HepG2 (cell line): ENCODE measurements at regions of chr2 and their contacts with region 1.

Region 1: GRCh38 chr2:102141970-102142828 is at the start of gene IL1R1:
- DNase-seq: peak; percentile 60
- ATAC-seq: peak; percentile 90
- H3K4me3 ChIP-seq: peak within 1 kb of the TSS; percentile 64 to 99 (median 86)
- H3K27ac ChIP-seq: peak within 1 kb of the TSS; percentile 74
- H3K4me1 ChIP-seq: peaks cover 63% of the 10 kb centered on the region
- H3K27me3 ChIP-seq: no peaks in the 10 kb centered on the region; a peak in 1 of 5 replicates
- CTCF ChIP-seq: peak; percentile 28; the same call in 1 of the 2 replicates
- EP300 ChIP-seq: peak; percentile 4 to 33; a peak in 1 of 4 replicates
- POLR2A ChIP-seq: peak; percentile 70 to 78
- RAD21 ChIP-seq: peak; percentile 67
- total RNA-seq, gene IL1R1: 38.0 and 48.3 TPM in 2 replicates

Region 2: DNA sequence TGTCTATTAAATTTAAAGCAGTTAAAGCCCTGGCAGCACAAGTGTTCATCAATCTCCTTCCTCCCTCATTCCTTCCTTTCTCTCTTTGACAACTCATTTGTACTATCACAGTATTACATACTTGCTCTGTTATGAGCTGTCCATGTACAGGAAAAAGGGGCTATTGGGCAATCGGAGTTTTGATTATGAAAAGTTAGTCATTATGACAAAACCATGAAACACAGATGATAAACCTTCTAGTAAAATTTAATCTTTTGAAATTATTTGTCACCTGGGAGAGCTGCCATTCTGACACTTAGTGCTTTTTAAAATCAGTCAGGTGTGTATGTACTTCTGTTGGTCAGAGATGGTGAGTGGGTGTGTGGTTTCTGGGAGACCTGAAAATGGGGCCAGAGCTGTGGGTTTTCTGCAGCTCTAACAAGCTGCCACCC is 405.3 kb before region 1 on chr2:
- CTCF ChIA-PET with region 1: no interaction called
- POLR2A ChIA-PET with region 1: no interaction called
- in situ Hi-C with region 1: no loop called
- intact Hi-C with region 1: no loop called
- DNase-seq: no peak
- ATAC-seq: no peak
- H3K4me3 ChIP-seq: no peak overlapping the region
- H3K27ac ChIP-seq: no peak overlapping the region
- H3K4me1 ChIP-seq: peaks cover 100% of the 10 kb centered on the region
- H3K27me3 ChIP-seq: no peaks in the 10 kb centered on the region
- CTCF ChIP-seq: no peak
- EP300 ChIP-seq: no peak
- POLR2A ChIP-seq: no peak
- RAD21 ChIP-seq: no peak

Region 3: DNA sequence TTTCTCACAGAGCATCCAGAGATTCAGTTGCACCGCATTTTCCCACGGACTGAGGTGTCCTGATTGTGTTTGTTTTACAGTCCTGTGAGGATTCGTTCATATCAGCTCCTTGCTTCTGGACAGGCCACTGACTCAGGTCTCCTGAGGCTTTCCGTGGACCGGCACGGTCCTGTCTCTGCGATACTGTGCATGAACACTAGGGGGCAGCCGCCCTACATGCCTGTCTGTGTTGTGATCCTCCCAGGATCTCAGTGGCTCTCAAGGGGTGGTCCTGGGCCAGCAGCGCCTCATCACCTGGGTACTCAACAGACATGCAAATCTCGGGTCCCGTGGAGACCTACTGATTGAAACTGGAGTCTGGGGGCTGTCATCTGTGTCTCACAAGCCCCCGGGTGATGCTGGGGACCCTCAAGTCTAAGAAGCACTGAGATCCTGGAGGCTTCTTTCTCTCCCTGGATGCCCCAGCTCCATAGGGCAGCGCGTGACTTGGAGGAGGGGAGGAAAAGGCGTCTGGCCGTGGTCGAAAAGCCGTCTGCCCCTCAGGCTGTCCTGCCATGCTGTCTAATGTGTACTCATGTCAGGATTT is 121.5 kb before region 1 on chr2:
- CTCF ChIA-PET with region 1: interaction called, 3 read pairs
- POLR2A ChIA-PET with region 1: interaction called, 17 read pairs
- in situ Hi-C with region 1: no loop called
- intact Hi-C with region 1: loop called (anchors 1 kb)
- DNase-seq: peak; percentile 80
- ATAC-seq: peak; percentile 95
- H3K4me3 ChIP-seq: no peak overlapping the region
- H3K27ac ChIP-seq: no peak overlapping the region
- H3K4me1 ChIP-seq: peaks cover 57% of the 10 kb centered on the region
- H3K27me3 ChIP-seq: no peaks in the 10 kb centered on the region
- CTCF ChIP-seq: peak; percentile 100
- EP300 ChIP-seq: no peak; a peak in 1 of 4 replicates
- POLR2A ChIP-seq: no peak
- RAD21 ChIP-seq: peak; percentile 99

Region 4: DNA sequence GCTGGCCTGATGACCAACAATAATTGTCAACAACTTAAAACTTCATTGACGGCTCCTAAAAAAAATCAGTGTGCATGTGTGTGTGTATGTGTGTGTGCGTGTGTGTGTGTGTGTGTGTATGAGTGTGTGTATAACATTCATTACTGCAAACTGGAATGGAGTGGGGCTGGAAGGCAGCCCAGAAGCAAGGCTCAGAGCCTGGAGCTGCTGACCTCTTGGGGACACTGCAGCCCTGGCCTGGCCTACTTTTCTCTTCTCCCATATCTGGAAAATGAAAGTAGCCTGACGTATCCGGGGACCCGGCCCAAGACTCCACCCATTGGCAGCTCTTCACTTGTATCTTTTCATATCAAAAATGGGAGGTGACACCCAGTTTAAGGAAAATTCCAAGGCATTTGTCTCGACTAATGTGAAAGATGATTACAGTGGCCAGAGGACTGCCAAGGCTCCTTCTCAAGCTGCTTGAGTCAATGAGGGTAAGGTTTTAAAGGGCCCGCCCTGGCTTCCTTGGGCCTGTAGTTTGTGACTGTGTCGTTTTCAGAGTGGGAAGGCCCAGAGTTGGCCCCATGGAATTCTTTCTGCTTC is 72.0 kb before region 1 on chr2:
- CTCF ChIA-PET with region 1: no interaction called
- POLR2A ChIA-PET with region 1: interaction called, 11 read pairs
- in situ Hi-C with region 1: no loop called
- intact Hi-C with region 1: no loop called
- DNase-seq: peak; percentile 79
- ATAC-seq: peak; percentile 96
- H3K4me3 ChIP-seq: peak overlapping the region; percentile 2 to 51 (median 39); a peak in 5 of 6 replicates
- H3K27ac ChIP-seq: peak overlapping the region; percentile 83
- H3K4me1 ChIP-seq: peaks cover 77% of the 10 kb centered on the region
- H3K27me3 ChIP-seq: no peaks in the 10 kb centered on the region
- CTCF ChIP-seq: peak; percentile 80
- EP300 ChIP-seq: 0 out of 4 replicates have a peak, but pooled peaks of 1 of the 2 experiments have one; percentile 4
- POLR2A ChIP-seq: no peak
- RAD21 ChIP-seq: peak; percentile 73

Region 5: GRCh38 chr2:102119255-102119654 is 22.9 kb before region 1 on chr2:
- CTCF ChIA-PET with region 1: no interaction called
- POLR2A ChIA-PET with region 1: interaction called, 12 read pairs
- in situ Hi-C with region 1: no loop called
- intact Hi-C with region 1: no loop called
- DNase-seq: no peak
- ATAC-seq: no peak
- H3K4me3 ChIP-seq: no peak overlapping the region
- H3K27ac ChIP-seq: no peak overlapping the region
- H3K4me1 ChIP-seq: peaks cover 34% of the 10 kb centered on the region
- H3K27me3 ChIP-seq: no peaks in the 10 kb centered on the region
- CTCF ChIP-seq: no peak
- EP300 ChIP-seq: no peak
- POLR2A ChIP-seq: no peak
- RAD21 ChIP-seq: no peak

Region 6: DNA sequence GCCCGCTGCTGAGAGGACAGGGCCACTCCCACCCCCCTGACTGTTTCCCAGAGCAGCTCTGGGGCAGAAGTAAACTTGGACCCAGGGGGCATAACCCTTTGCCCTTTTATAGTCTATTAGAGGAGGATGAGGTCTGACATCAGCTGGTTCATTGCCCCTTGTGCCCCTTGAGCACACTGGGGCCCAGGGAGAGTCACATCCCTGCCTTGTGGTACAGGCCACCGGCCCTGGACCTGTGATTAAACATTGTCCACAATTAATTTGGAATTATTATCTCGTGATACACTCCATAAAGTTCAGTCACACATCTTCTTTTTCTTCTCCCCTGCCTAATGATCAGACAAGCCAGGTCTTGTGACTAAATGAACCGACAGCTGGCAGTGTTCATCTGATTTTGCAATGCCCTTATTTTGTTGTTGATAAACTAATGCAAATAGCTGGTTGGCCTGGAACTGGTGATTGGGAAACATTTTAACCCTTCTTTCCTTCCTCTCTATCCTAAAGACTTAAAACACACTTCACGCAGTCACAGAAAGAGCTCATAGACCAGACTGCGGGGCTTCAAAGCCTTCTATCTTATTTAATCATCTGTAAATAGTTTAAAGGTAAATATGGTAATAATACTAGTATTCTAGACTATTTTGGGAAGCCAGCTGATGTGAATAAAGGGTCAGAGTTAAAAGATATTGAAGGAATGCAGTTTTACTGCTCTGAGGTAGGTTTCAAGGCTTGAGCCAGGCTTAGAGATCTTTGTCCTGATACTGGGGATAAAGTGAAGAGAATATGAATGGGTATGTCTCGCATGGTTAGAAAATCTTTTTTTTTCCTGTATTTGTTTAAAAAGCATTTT is 13.7 kb after region 1 on chr2:
- CTCF ChIA-PET with region 1: no interaction called
- POLR2A ChIA-PET with region 1: interaction called, 128 read pairs
- in situ Hi-C with region 1: no loop called
- intact Hi-C with region 1: loop called (anchors 1 kb)
- DNase-seq: peak; percentile 100
- ATAC-seq: peak; percentile 91
- H3K4me3 ChIP-seq: peak overlapping the region in 1 of 3 experiments; percentile 21; a peak in 2 of 6 replicates
- H3K27ac ChIP-seq: peak overlapping the region; percentile 80
- H3K4me1 ChIP-seq: peaks cover 84% of the 10 kb centered on the region
- H3K27me3 ChIP-seq: no peaks in the 10 kb centered on the region
- CTCF ChIP-seq: peak; percentile 37; the same call in 1 of the 2 replicates
- EP300 ChIP-seq: peak; percentile 68 to 99; a peak in 3 of 4 replicates
- POLR2A ChIP-seq: peak in 1 of 2 experiments; percentile 18; a peak in 1 of 4 replicates
- RAD21 ChIP-seq: peak; percentile 42; the same call in 1 of the 2 replicates